Lower leg skin (tissue), 4 donors: ENCODE measurements at regions of chr16 and their contacts with region 1.

Region 1: GRCh38 chr16:86968866-86969265 is 348.3 kb downstream of the C16orf95 start:
- DNase-seq: no peak
- H3K4me3 ChIP-seq: no peak overlapping the region
- CTCF ChIP-seq: no peak
- POLR2A ChIP-seq: no peak

Region 2: GRCh38 chr16:86919578-86920305 is 49.1 kb before region 1 on chr16:
- intact Hi-C with region 1: loop called (anchors 1 kb)
- DNase-seq: no peak
- H3K4me3 ChIP-seq: no peak overlapping the region
- CTCF ChIP-seq: no peak
- POLR2A ChIP-seq: no peak